Activated B cell treated with CpG ODN at 0.5 μM for 24 hours (primary cell): ENCODE measurements at regions of chr6 and their contacts with region 1.

Region 1: DNA sequence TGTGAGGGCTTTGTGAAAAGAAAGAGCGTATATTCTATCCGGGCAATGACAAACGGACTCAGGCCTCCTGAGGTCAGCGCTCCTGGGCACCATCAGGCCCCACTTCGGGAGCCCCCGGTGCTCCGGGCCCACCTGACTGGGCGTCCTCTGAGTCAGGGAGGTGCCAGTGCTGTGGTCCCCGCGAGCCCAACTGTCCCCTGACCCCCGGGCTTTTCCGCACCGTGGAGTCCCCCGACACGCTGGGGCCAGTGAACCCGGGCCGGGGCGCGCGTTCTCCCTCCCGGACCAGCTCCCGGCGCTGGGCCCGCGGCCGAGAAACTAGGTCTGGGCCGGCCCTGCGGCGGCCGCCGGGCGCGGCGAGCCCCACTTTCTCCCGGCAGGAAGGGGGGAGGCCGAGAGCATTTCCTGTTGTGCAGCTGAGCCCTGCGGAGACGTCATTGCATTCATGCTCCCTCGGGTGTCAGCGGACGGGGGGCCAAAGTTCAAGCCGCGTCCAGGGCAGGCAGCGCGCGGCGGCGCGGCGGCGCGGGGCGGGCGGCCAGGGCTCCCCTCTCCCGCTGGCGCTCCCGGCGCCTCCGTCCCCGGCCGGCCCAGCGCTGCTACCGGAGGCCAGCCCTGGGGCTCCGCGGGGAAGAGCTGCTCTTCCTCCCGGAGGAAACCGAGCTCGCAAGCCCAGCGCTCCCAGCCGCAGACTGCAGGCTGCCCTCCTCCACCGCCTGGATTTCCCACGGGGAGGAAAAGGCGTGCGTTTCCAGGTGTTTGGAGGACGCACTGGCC is 18.3 kb downstream of the HIVEP2 start:
- DNase-seq: peak; percentile 72
- ATAC-seq: peak; percentile 93
- H3K4me3 Mint-ChIP-seq: peak overlapping the region; percentile 86
- H3K27ac Mint-ChIP-seq: peak overlapping the region; percentile 93
- H3K4me1 Mint-ChIP-seq: peaks cover 50% of the 10 kb centered on the region
- H3K27me3 Mint-ChIP-seq: no peaks in the 10 kb centered on the region
- CTCF ChIP-seq: no peak

Region 2: GRCh38 chr6:142902636-142903053 is 24.0 kb before region 1 on chr6:
- CTCF ChIA-PET with region 1: no interaction called
- POLR2A ChIA-PET with region 1: interaction called, 13 read pairs
- intact Hi-C with region 1: no loop called
- DNase-seq: no peak
- ATAC-seq: peak; percentile 81
- H3K4me3 Mint-ChIP-seq: peak overlapping the region; percentile 60
- H3K27ac Mint-ChIP-seq: peak overlapping the region; percentile 72
- H3K4me1 Mint-ChIP-seq: peaks cover 43% of the 10 kb centered on the region
- H3K27me3 Mint-ChIP-seq: no peaks in the 10 kb centered on the region
- CTCF ChIP-seq: no peak